Activated CD4-positive, alpha-beta T cell treated with anti-CD3 and anti-CD28 coated beads for 36 hours (primary cell): ENCODE measurements at regions of chr7 and their contacts with region 1.

Region 1: DNA sequence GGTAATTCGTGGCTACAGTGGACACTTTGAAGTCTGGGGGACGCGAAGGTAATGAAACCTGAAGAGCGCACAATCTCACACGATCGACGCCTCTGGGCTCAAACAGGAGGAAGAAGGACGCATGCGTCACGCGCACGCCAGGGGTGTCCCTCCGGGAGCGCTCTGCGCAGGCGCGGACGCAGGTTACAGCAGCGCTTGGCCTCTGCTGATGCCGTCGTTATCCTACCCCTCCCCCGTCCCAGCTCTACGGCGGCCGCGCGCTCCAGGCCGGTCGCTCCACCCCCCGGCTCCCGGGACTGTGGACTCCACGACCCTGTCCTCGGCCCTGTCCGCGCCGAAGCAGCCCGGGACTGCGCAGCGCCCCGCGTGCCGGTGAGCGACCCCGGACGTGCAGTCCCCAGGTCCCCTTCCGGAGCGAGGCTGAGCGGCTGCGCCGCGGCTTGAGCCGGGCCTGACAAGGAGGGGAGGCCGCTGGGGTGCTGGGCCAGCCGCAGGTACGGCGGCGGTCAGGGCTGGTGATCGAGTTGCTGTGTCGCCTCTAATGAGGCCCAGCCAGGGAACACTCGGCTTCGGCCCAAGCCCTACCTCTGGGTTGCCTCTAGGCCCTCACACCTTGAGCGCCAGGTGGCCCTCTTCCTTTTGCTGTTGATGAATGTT is at the start of gene TMEM106B:
- DNase-seq: peak; percentile 99
- ATAC-seq: peak; percentile 92
- H3K4me3 Mint-ChIP-seq: peak within 1 kb of the TSS; percentile 98
- H3K27ac Mint-ChIP-seq: peak within 1 kb of the TSS; percentile 100
- H3K4me1 Mint-ChIP-seq: peaks cover 27% of the 10 kb centered on the region
- H3K27me3 Mint-ChIP-seq: no peaks in the 10 kb centered on the region
- total RNA-seq, gene TMEM106B: 21.6 to 25.3 TPM

Region 2: GRCh38 chr7:10939911-10940703 is 1271.1 kb before region 1 on chr7:
- CTCF ChIA-PET with region 1: no interaction called
- POLR2A ChIA-PET with region 1: no interaction called
- intact Hi-C with region 1: loop called in 1 of 2 experiments (anchors 1 kb)
- DNase-seq: peak; percentile 93
- ATAC-seq: peak; percentile 91
- H3K4me3 Mint-ChIP-seq: no peak overlapping the region
- H3K27ac Mint-ChIP-seq: no peak overlapping the region
- H3K4me1 Mint-ChIP-seq: peaks cover 35% of the 10 kb centered on the region
- H3K27me3 Mint-ChIP-seq: no peaks in the 10 kb centered on the region

Region 3: DNA sequence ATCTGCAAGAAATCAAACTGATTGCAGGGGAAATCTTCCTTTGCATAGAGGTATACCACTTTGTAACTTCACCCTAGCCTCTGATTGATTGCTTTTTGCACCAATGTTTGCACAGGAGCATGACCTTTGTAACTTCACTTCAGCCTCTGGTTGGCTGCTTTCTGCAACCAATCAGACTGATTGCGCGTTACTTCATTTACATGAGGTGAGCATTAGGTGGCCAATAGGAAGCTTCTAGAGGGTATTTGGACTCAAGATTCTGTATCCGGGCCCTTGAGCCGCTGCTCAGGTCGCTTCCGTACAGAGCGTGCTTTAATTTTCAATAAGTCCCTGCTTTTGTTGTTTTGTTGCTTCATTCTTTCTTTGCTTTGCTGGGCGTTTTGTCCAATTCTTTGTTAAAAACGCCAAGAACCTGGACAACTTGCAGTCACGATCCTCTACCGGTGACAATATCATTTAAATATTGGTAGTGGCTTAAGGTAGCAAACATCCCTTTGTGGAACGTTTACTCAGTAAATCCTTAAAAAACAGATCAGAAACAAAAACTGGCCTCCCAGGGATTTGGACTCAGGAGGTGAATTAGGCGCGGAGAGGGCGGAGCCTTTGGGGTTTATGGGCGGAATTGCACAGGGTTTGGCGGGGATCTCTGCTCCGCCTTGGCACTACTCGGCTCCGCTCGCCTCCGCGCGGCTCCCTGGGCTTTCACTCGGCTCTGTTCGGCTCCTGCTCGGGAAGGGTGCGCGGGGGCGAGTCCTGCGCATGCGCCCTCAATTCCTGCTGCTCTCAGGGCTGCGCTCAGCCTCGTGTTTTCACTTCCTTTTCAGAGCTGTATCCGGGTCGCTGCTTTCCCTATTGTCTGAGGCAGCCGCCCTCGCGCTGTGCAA is 1237.9 kb before region 1 on chr7 and contains the start of gene PHF14:
- CTCF ChIA-PET with region 1: no interaction called
- POLR2A ChIA-PET with region 1: no interaction called
- intact Hi-C with region 1: loop called in 1 of 2 experiments (anchors 10 kb)
- DNase-seq: peak; percentile 98
- ATAC-seq: peak; percentile 99
- H3K4me3 Mint-ChIP-seq: peak within 1 kb of the TSS; percentile 88
- H3K27ac Mint-ChIP-seq: peak within 1 kb of the TSS; percentile 93
- H3K4me1 Mint-ChIP-seq: peaks cover 39% of the 10 kb centered on the region
- H3K27me3 Mint-ChIP-seq: peaks cover 2% of the 10 kb centered on the region
- total RNA-seq, gene PHF14: 37.4 to 40.3 TPM

Region 4: GRCh38 chr7:12067141-12067831 is 143.9 kb before region 1 on chr7:
- CTCF ChIA-PET with region 1: interaction called, 3 read pairs
- POLR2A ChIA-PET with region 1: no interaction called
- intact Hi-C with region 1: loop called (anchors 1 kb)
- DNase-seq: peak; percentile 68
- ATAC-seq: peak; percentile 27
- H3K4me3 Mint-ChIP-seq: no peak overlapping the region
- H3K27ac Mint-ChIP-seq: no peak overlapping the region
- H3K4me1 Mint-ChIP-seq: peaks cover 19% of the 10 kb centered on the region
- H3K27me3 Mint-ChIP-seq: no peaks in the 10 kb centered on the region

Region 5: GRCh38 chr7:12257582-12257981 is 46.4 kb after region 1 on chr7:
- CTCF ChIA-PET with region 1: no interaction called
- POLR2A ChIA-PET with region 1: interaction called, 3 read pairs
- intact Hi-C with region 1: loop called (anchors 1 kb)
- DNase-seq: peak; percentile 30
- ATAC-seq: peak; percentile 95
- H3K4me3 Mint-ChIP-seq: no peak overlapping the region
- H3K27ac Mint-ChIP-seq: no peak overlapping the region
- H3K4me1 Mint-ChIP-seq: peaks cover 8% of the 10 kb centered on the region
- H3K27me3 Mint-ChIP-seq: no peaks in the 10 kb centered on the region

Region 6: DNA sequence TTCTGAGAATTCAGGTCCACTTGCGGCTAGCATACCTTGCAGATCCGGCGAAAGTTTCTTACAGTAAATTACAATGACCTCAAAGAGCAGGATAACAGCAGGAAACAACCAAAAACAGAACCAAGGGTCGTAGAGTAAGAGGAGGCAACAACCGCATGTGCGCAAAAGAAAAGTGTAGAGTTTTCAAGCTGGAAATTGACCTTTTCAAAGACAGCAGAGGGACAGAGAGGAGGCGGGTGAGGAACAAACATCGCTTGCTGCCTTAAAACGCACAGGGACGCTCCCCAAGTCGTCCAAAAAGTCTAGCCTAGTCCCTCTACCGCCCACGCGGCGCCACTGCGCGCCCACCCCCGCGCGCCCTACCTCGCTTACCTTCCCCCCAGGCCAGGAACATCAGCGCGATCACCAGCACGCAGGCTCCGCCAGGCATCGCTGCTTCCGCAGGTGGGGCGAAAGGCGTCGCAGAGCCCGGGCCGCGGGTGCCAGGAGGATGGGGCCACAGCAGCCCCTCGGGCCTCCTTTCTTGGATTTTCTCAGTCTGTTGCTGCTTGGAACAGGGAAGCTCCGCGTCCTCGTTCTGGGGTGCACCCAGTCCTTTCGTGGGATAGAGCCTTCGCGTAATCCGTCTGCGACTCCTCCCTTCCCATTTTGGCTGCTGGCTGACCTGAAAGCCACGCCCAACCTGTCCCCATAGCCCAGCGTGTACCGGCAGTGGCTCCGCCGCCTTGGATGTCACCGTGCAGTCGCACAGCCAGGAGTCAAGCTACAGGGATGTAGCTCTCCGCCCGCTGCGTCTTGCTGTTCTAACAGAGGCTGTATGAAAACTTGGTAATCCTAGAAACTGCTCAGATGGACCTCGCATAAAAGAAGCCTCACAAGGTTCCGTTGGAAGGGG is 192.4 kb after region 1 on chr7 and contains the start of gene VWDE:
- CTCF ChIA-PET with region 1: no interaction called
- POLR2A ChIA-PET with region 1: no interaction called
- intact Hi-C with region 1: loop called in 1 of 2 experiments (anchors 1 kb)
- DNase-seq: peak; percentile 82
- ATAC-seq: peak; percentile 92
- H3K4me3 Mint-ChIP-seq: peak within 1 kb of the TSS; percentile 82
- H3K27ac Mint-ChIP-seq: peak within 1 kb of the TSS; percentile 87
- H3K4me1 Mint-ChIP-seq: peaks cover 8% of the 10 kb centered on the region
- H3K27me3 Mint-ChIP-seq: peaks cover 11% of the 10 kb centered on the region
- total RNA-seq, gene VWDE: 2.2 to 2.3 TPM

Region 7: GRCh38 chr7:13091974-13092707 is 881.0 kb after region 1 on chr7:
- CTCF ChIA-PET with region 1: no interaction called
- POLR2A ChIA-PET with region 1: no interaction called
- intact Hi-C with region 1: no loop called
- DNase-seq: no peak
- ATAC-seq: no peak
- H3K4me3 Mint-ChIP-seq: no peak overlapping the region
- H3K27ac Mint-ChIP-seq: no peak overlapping the region
- H3K4me1 Mint-ChIP-seq: no peaks in the 10 kb centered on the region
- H3K27me3 Mint-ChIP-seq: peaks cover 7% of the 10 kb centered on the region